Calu3 (cell line): ENCODE measurements at regions of chr11 and their contacts with region 1.

Region 1: DNA sequence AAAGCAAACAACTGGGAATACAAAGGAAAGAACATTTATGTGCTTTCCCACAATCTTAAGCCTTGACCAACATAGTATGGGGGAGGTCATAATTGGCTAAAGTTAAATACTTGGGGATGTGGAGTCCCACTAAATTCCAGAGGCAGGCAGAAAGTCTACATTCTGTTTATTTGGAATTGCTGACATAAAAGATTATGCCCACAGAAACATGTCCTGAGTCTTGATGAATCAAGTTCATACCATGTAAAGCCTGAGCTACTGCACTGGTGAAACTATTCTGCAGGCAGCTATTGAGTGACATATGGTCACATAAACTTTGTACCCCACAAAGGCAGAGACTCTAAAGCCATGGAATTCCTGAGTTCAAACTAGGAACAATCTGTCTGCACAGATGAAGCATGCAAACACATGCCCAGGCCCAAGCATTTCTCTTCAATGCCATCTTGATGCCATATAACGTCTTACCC is 69.9 kb upstream of the CHRM4 start:
- DNase-seq: no peak
- H3K4me3 Mint-ChIP-seq: no peak overlapping the region
- H3K27ac Mint-ChIP-seq: no peak overlapping the region
- H3K4me1 Mint-ChIP-seq: no peaks in the 10 kb centered on the region
- H3K27me3 Mint-ChIP-seq: no peaks in the 10 kb centered on the region
- CTCF ChIP-seq: no peak

Region 2: DNA sequence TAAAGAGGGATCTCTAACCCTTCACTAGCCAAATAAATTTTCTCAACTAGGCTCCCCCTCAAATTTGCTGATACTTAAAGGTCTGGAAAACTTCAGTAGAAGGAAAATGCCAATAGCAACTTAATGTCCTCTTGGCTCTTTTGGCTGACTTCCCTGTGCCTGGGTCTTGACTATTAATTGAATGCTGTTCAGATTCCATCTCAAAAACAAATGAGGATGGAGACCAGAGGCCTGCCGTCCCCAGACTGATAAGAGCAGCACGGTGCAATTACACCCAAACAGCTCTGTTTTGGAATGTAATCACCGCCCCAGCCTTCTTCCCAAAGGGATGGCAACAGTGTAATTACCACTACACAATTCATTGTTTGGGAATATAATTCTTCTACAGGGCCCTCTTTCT is 19.4 kb after region 1 on chr11:
- CTCF ChIA-PET with region 1: no interaction called
- intact Hi-C with region 1: loop called (anchors 1 kb)
- DNase-seq: no peak
- H3K4me3 Mint-ChIP-seq: no peak overlapping the region
- H3K27ac Mint-ChIP-seq: no peak overlapping the region
- H3K4me1 Mint-ChIP-seq: no peaks in the 10 kb centered on the region
- H3K27me3 Mint-ChIP-seq: no peaks in the 10 kb centered on the region
- CTCF ChIP-seq: no peak

Region 3: GRCh38 chr11:46669711-46670139 is 208.2 kb after region 1 on chr11:
- CTCF ChIA-PET with region 1: no interaction called
- intact Hi-C with region 1: no loop called
- DNase-seq: no peak
- H3K4me3 Mint-ChIP-seq: no peak overlapping the region
- H3K27ac Mint-ChIP-seq: no peak overlapping the region
- H3K4me1 Mint-ChIP-seq: no peaks in the 10 kb centered on the region
- H3K27me3 Mint-ChIP-seq: no peaks in the 10 kb centered on the region
- CTCF ChIP-seq: no peak

Region 4: GRCh38 chr11:47087801-47088200 is 626.3 kb after region 1 on chr11:
- CTCF ChIA-PET with region 1: no interaction called
- intact Hi-C with region 1: no loop called
- DNase-seq: no peak
- H3K4me3 Mint-ChIP-seq: no peak overlapping the region
- H3K27ac Mint-ChIP-seq: no peak overlapping the region
- H3K4me1 Mint-ChIP-seq: peaks cover 8% of the 10 kb centered on the region
- H3K27me3 Mint-ChIP-seq: no peaks in the 10 kb centered on the region
- CTCF ChIP-seq: no peak